ENCODE measurements at regions of chr2 and their contacts with region 1.

Region 1: DNA sequence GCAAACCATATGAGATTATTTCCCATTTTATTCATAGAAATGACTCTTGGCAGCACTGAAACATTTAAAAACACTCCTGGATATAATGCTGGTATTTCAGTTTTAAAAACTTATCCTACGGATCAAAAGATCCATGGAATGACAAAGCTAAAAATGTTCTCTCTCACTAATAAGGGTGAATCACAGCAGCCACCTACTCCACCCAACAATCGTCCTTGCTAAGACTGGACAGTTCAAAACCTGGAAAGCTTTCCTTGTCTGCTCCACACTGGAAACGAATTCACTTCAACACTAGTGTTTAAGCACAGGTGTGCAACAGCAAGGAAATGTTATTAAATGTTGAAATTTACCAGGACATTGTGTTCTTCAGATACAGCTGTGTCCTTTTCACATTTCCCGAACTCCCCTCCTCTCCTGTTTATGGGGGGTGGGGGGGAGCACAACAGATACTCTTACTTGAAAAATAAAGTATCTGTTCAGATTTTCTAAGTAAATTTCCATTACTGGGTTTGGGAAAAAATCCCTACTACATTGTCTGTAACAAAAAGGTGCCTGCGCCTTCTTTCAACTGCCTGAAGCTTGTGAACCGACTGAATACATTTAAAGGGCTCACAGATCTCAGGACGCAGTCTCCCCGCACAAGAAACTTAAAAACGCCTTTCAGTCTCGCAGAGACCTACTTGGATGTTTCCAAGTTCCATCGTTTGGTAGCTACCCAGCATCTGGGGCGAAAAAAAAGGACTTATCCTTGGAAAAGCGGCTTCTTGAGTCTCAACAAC is 1.4 kb downstream of the YWHAQ start:
- DNase-seq: no peak
- H3K4me3 ChIP-seq: peak overlapping the region; percentile 58
- CTCF ChIP-seq: no peak

Region 2: DNA sequence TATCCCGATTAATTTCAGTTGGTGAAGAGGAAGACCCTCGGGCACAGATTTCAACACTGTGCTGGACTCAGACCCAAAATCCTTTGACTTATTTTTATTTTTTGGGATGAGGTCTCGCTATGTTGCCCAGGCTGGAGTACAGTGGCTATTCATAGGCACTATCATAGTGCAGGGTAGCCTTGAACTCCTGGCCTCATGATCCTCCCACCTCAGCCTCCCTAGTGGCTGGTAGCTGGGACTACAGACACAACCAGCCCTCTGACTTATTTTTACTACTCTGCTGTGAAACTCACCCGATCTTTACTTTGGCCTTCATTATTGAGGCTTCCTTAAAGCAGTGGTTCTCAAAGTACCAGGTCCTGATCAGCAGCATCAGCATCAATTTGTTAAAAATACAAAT is 55.6 kb before region 1 on chr2:
- in situ Hi-C with region 1: loop called (anchors 5 kb)
- DNase-seq: no peak
- H3K4me3 ChIP-seq: no peak overlapping the region
- CTCF ChIP-seq: no peak

Region 3: DNA sequence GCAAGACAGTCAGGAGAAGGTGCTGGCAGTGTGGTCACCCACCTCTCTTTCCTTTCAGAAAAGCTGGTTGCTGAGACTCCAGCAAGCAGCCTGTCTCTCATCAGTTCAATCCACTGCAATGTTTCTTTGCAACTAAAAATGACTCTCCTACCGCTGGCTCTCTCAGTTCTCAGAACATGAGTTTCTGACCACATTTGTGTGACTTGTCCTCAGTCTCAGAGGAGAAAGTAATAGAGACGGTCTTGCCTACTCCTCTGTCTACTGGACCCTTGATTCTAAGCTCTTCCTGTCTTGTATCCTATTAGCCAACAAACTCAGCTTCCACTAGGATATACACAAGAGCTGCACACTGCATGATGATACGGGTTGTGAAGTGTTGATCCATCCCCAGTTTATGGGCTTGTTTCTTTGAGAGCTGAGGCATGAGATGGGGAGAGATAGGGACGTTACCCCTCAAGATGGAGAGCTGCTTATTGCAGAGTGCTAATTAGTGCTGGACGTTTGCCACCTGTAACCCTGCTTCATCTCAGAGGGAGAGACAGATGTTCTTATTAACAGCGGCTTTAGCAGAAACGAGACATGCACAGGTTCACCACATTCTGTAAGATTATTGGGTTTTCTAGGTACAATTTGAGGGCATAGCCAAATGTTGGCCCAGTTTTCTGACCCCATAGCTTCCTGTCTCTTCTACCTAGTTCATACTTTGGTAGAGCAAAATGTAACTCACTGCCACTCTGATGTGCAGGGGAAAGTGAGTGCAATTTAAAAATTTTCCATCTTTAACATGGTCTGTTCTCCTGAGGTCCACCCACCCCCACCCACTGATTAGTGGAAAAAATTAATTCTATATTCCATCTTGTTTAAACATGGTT is 33.8 kb after region 1 on chr2:
- in situ Hi-C with region 1: loop called (anchors 5 kb)
- DNase-seq: no peak
- H3K4me3 ChIP-seq: no peak overlapping the region
- CTCF ChIP-seq: no peak